Sigmoid colon (tissue), 7 donors: ENCODE measurements at regions of chr19 and their contacts with region 1.

Region 1: GRCh38 chr19:10899151-10899653 is 27.8 kb downstream of the CARM1 start:
- DNase-seq: no peak
- H3K4me3 ChIP-seq: no peak overlapping the region
- H3K27ac ChIP-seq: peak overlapping the region; percentile 48 to 78 (median 76)
- H3K4me1 ChIP-seq: peaks cover 0 to 73% (median 62%) of the 10 kb centered on the region in 4 donors
- H3K27me3 ChIP-seq: no peaks in the 10 kb centered on the region
- CTCF ChIP-seq: no peak
- EP300 ChIP-seq: no peak
- POLR2A ChIP-seq: no peak

Region 2: DNA sequence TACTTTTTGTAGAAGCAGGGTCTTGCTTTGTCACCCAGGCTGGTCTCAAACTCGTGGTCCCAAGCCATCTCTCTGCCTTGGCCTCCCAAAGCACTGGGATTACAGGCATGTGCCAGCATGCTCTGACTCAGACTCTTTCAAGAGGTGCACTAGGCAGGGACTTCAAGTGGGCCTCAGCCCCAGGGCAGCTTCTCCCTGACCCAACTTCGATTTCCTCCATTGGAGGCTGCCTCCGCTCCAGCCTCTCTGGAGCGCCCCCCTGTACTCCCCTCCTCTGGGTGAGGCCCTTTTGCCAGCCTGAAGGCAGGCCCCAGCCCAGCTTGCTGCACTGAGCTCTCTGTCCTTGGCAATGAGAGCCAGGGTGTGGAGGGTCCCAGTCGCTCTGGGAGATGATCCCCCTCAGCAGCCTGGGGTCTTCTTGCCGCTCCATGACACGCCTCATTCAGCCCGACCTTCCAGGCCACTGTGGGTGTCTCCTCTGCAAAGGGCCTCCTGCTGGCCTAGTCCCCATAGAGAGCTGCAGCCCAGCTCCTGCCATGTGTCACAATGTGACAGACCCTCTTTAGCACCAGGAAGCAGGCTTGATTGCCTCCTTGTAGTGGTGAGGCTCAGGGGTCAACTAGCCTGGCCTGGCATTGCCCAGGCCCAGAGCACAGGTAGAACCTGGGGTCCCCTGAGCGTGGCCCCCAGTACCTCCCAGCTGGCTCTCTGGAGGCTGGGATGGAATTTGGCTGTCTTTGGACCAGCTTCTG is 11.4 kb before region 1 on chr19:
- intact Hi-C with region 1: loop called (anchors 2 kb)
- DNase-seq: no peak
- H3K4me3 ChIP-seq: no peak overlapping the region
- H3K27ac ChIP-seq: peak overlapping the region in 3 of 4 donors; percentile 15 to 78 (median 54)
- H3K4me1 ChIP-seq: peaks cover 0 to 77% (median 69%) of the 10 kb centered on the region in 4 donors
- H3K27me3 ChIP-seq: no peaks in the 10 kb centered on the region
- CTCF ChIP-seq: no peak
- EP300 ChIP-seq: no peak
- POLR2A ChIP-seq: no peak